ENCODE measurements at regions of chr2 and their contacts with region 1.

Region 1: DNA sequence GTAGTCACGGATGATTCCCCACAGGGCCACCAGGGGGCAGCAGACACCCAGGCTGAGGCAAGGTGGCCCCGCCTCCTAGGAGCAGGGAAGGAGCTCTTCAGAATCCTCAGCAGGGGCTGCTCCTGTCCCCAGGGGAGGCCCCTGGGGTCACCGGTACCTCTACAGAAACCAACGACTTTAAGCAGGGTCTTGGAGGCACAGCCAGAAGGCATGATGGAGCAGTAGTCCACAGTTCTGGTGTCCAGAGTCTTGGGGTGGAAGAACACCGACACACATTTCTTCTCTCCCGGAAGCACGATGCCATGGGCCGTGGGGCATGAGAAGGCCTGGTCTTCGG is 11.5 kb downstream of the CFAP65 start:
- DNase-seq: peak; percentile 73 to 85 (median 78)
- H3K4me3 ChIP-seq: no peak overlapping the region
- H3K27ac ChIP-seq: no peak overlapping the region
- H3K4me1 ChIP-seq: peaks cover 0 to 2% (median 0%) of the 10 kb centered on the region in 4 experiments
- H3K27me3 ChIP-seq: peaks cover 1 to 18% (median 6%) of the 10 kb centered on the region in 5 experiments

Region 2: DNA sequence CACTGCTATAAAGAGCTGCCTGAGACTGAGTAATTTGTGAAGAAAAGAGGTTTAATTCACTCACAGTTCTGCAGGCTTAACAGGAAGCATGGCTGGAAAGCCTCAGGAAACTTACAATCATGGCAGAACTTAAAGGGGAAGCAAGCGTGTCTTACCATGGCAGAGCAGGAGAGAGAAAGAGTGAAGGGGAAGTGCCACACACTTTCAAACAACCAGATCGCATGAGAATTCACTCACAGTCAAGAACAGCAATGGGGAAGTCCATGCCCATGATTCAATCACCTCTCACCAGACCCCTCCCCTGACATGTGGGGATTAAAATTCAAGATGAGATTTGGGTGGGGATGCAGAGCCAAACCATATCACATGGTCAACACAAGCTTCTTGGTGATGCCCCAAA is 105.0 kb before region 1 on chr2:
- CTCF ChIA-PET with region 1: no interaction called
- POLR2A ChIA-PET with region 1: no interaction called
- DNase-seq: peak in 2 of 3 donors; percentile 9 to 21
- H3K4me3 ChIP-seq: no peak overlapping the region
- H3K27ac ChIP-seq: no peak overlapping the region
- H3K4me1 ChIP-seq: no peaks in the 10 kb centered on the region
- H3K27me3 ChIP-seq: peaks cover 6 to 32% (median 19%) of the 10 kb centered on the region in 5 experiments

Region 3: DNA sequence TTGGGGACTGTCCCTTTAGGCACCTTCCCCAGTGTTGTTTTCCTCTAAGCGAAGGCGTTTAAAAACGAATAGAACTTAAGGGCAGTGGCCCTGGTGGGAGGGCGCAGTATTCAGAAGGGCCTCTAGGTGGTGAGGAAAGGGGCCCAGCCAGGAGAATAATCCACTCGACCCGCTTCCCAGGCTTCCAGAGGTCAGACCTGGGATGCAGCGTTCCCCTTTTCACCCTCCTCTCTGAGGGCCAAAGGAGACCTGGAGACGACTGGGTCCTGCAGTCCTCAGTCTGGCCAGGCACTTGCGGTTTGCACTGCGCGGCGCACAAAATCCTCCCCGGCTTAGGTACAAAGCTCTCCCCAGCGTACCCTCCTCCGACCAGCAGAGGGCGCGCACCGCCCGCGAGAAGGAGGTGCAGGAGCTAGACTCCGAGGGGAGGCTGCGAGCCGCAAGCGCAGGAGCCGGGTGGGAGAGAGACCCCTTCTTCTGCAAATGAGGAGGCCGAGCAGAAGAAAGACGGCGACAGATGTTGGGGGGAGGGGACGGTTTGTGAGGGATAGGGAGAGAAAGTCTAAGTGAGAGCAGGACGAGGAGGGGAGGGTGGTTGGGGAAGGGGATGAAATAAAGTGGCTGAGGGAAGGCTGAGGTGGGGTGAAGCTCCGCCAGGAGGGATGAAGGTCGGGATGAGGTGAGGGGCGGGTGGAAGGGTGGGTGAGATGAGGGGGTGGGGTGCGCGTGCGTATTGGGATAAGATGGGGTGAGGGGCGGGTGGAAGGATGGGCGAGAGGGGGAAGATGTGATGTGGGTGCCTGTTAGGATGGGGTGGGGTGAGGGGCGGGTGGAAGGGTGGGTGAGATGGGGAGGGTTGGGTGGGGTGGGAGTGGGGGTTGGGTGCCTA is 49.7 kb before region 1 on chr2:
- CTCF ChIA-PET with region 1: interaction called, 10 read pairs
- POLR2A ChIA-PET with region 1: no interaction called
- DNase-seq: peak; percentile 87 to 93 (median 91)
- H3K4me3 ChIP-seq: peak overlapping the region in 4 of 7 experiments; percentile 19 to 74 (median 52)
- H3K27ac ChIP-seq: no peak overlapping the region
- H3K4me1 ChIP-seq: peaks cover 0 to 44% (median 24%) of the 10 kb centered on the region in 4 experiments
- H3K27me3 ChIP-seq: peaks cover 9 to 92% (median 32%) of the 10 kb centered on the region in 5 experiments

Region 4: DNA sequence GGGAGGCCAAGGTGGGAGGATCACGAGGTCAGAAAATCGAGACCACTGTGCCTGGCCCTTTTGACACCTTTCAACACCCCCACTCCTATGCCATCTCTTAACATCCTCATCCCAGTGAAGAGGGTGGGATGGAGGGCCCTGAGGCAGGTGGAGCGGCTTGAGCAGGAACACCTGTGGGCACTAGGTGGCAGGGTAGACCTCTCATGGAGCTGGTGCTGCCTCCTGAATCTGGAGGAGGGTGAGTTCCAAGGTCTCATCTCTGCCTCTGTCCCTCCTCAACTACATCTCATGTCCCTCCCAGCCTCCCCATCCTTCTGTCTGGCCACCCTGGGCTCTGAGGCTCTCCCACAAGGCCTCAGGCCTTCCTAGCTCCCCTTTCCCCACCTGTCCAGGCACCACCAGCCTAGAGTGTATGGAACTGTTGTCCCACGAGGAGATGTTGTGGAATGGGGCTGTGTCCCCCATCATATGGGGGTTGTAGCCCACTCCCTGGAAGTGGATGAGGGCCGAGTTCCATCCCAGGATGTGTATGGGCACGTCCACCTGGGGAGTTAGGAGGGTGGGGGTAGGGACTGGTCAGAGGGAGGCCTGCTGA is 19.5 kb before region 1 on chr2:
- CTCF ChIA-PET with region 1: interaction called, 57 read pairs
- POLR2A ChIA-PET with region 1: interaction called, 3 read pairs
- DNase-seq: peak in 1 of 3 donors; percentile 45
- H3K4me3 ChIP-seq: no peak overlapping the region
- H3K27ac ChIP-seq: no peak overlapping the region
- H3K4me1 ChIP-seq: no peaks in the 10 kb centered on the region
- H3K27me3 ChIP-seq: peaks cover 7 to 43% (median 12%) of the 10 kb centered on the region in 5 experiments

Region 5: GRCh38 chr2:219119422-219120043 is 89.7 kb after region 1 on chr2:
- CTCF ChIA-PET with region 1: interaction called, 11 read pairs
- POLR2A ChIA-PET with region 1: no interaction called
- DNase-seq: peak; percentile 49 to 68 (median 61)
- H3K4me3 ChIP-seq: no peak overlapping the region
- H3K27ac ChIP-seq: no peak overlapping the region
- H3K4me1 ChIP-seq: peaks cover 0 to 11% (median 0%) of the 10 kb centered on the region in 4 experiments
- H3K27me3 ChIP-seq: no peaks in the 10 kb centered on the region

Region 6: GRCh38 chr2:219160186-219161017 is 130.6 kb after region 1 on chr2 and contains the start of gene NHEJ1:
- CTCF ChIA-PET with region 1: interaction called, 162 read pairs
- POLR2A ChIA-PET with region 1: no interaction called
- DNase-seq: peak; percentile 90 to 94 (median 94)
- H3K4me3 ChIP-seq: peak within 1 kb of the TSS; percentile 52 to 84 (median 78)
- H3K27ac ChIP-seq: peak within 1 kb of the TSS in 1 of 2 experiments; percentile 73
- H3K4me1 ChIP-seq: peaks cover 0 to 14% (median 13%) of the 10 kb centered on the region in 4 experiments
- H3K27me3 ChIP-seq: no peaks in the 10 kb centered on the region